Activated CD4-positive, alpha-beta memory T cell treated with anti-CD3 and anti-CD28 coated beads for 36 hours (primary cell): ENCODE measurements at regions of chr3 and their contacts with region 1.

Region 1: DNA sequence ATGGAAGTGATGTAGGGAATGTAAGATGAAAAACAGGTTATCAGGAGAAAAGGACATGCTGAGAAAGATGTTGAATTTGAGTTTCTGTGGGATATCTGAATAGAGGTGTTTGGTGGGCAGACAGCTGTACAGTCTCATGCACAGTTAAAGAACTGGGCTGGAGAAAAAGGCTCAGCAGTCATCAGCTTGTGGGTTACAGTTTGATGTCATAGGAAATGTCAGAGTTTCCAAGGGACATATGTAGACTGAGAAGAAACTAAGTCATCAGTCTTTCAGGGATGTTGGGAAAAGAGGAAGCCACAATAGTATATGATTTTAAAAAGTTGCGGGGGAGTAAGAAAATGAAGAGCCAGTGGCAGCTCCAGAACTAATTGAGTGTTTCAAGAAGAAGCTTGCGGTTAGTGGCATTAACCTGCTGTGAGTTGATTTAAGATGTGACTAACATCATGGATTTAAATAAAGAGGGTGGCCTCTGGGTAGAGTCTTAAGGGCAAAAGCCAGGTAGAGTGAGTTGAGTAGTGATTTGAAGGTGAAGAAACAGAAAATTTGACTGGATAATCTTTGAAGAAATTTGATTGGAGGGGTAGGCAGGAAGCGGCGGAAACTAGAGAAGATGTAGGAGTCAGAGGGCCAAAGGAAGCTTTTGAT is 24.6 kb downstream of the GORASP1 start:
- DNase-seq: no peak
- H3K4me3 Mint-ChIP-seq: no peak overlapping the region
- H3K27ac Mint-ChIP-seq: peak overlapping the region; percentile 80
- H3K4me1 Mint-ChIP-seq: peaks cover 20% of the 10 kb centered on the region
- H3K27me3 Mint-ChIP-seq: no peaks in the 10 kb centered on the region

Region 2: DNA sequence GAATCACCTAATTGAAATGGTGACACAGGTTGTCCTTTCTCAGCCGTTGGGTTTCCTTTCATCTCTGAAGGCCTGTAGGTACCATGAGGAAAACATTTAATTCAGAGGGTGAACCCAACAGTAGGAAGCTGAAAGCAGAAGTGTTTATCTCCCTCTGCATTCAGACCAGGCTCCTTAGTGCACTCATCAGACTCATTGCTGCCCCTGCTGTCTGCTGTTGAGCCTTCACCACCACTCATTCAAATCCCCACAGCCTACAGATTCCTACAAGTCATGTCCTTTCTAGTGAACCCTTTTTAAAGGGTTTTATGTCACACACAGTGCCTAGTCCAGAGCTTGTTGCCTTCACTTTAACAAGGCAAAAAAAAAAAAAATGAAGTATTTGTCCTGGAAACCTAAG is 17.6 kb before region 1 on chr3:
- CTCF ChIA-PET with region 1: interaction called, 4 read pairs
- POLR2A ChIA-PET with region 1: interaction called, 3 read pairs
- intact Hi-C with region 1: loop called (anchors 2 kb)
- DNase-seq: peak; percentile 55
- H3K4me3 Mint-ChIP-seq: no peak overlapping the region
- H3K27ac Mint-ChIP-seq: peak overlapping the region; percentile 25
- H3K4me1 Mint-ChIP-seq: peaks cover 27% of the 10 kb centered on the region
- H3K27me3 Mint-ChIP-seq: no peaks in the 10 kb centered on the region

Region 3: GRCh38 chr3:40951636-40952035 is 1868.8 kb after region 1 on chr3:
- CTCF ChIA-PET with region 1: no interaction called
- POLR2A ChIA-PET with region 1: no interaction called
- intact Hi-C with region 1: no loop called
- DNase-seq: no peak
- H3K4me3 Mint-ChIP-seq: no peak overlapping the region
- H3K27ac Mint-ChIP-seq: no peak overlapping the region
- H3K4me1 Mint-ChIP-seq: no peaks in the 10 kb centered on the region
- H3K27me3 Mint-ChIP-seq: peaks cover 7% of the 10 kb centered on the region